Pancreas (tissue), 10 donors: ENCODE measurements at regions of chr19 and their contacts with region 1.

Region 1: DNA sequence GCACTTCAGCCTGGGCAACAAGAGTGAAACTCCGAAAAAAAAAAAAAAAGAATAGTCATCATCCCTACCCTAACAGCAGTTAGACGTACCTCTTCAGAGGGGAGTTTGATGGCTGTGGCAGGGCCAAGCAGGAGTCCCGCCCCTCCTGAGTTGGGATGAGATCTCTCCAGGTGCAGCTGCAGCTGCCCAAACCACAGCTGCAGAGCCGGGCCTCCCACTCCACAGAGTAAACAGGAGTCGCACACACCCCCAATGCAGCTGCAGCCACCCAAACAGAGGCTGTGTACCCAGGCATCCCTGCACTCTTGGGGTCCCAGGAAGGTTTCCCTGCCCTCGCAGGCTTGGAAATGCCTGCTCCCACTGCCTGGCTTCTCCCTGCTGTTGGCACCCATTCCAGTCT is 17.4 kb upstream of the MLLT1 start:
- DNase-seq: no peak
- ATAC-seq: no peak
- H3K4me3 ChIP-seq: no peak overlapping the region
- H3K27ac ChIP-seq: no peak overlapping the region
- H3K4me1 ChIP-seq: no peaks in the 10 kb centered on the region
- H3K27me3 ChIP-seq: no peaks in the 10 kb centered on the region
- CTCF ChIP-seq: no peak

Region 2: GRCh38 chr19:6138066-6138465 is 159.1 kb before region 1 on chr19:
- intact Hi-C with region 1: no loop called
- DNase-seq: no peak
- ATAC-seq: no peak
- H3K4me3 ChIP-seq: no peak overlapping the region
- H3K27ac ChIP-seq: no peak overlapping the region
- H3K4me1 ChIP-seq: no peaks in the 10 kb centered on the region
- H3K27me3 ChIP-seq: no peaks in the 10 kb centered on the region
- CTCF ChIP-seq: no peak

Region 3: DNA sequence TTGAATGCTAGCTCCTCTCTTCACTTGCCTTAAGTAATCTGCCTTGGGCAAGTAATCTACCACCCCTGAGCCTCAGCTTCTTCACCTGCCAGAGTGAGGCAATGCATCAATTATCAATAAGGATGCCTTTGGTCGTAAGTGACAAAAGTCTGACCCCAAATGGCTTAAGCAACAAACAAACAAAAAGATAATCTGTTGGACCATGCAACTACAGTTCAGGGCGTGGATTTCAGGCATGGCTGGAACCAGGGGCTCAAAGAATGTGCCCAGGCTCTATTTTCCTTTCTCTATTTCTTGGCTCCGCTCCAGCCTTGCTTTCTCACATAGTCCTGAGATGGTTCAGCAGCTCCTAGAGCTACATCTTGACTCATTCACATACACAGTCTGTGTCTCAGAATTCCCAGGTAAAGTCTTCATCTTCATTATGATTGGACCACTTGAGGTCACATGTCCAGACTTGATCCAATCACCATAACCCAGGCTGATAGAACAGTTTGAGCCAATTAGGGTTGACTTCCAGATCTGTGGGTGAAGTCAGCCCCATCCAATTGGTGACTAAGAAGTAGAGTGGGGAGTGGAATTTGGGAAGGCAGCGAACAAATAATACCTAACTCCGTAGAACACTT is 132.2 kb before region 1 on chr19:
- intact Hi-C with region 1: loop called in 1 of 3 experiments (anchors 5 kb)
- DNase-seq: no peak
- ATAC-seq: no peak
- H3K4me3 ChIP-seq: no peak overlapping the region
- H3K27ac ChIP-seq: no peak overlapping the region
- H3K4me1 ChIP-seq: no peaks in the 10 kb centered on the region
- H3K27me3 ChIP-seq: no peaks in the 10 kb centered on the region
- CTCF ChIP-seq: no peak

Region 4: GRCh38 chr19:6218491-6219162 is 78.6 kb before region 1 on chr19:
- intact Hi-C with region 1: loop called in 1 of 3 experiments (anchors 5 kb)
- DNase-seq: peak; percentile 68 to 95 (median 86)
- ATAC-seq: peak; percentile 65 to 79 (median 78)
- H3K4me3 ChIP-seq: no peak overlapping the region
- H3K27ac ChIP-seq: no peak overlapping the region
- H3K4me1 ChIP-seq: peaks cover 0 to 8% (median 4%) of the 10 kb centered on the region in 3 donors
- H3K27me3 ChIP-seq: no peaks in the 10 kb centered on the region
- CTCF ChIP-seq: peak; percentile 95 to 97 (median 97)